ENCODE measurements at regions of chr6 and their contacts with region 1.

Region 1: GRCh38 chr6:138987640-138988468 is at the start of gene REPS1:
- DNase-seq: peak; percentile 86
- H3K4me3 ChIP-seq: peak within 1 kb of the TSS; percentile 84 to 92
- H3K27ac ChIP-seq: peak within 1 kb of the TSS; percentile 89
- H3K4me1 ChIP-seq: no peaks in the 10 kb centered on the region
- H3K27me3 ChIP-seq: no peaks in the 10 kb centered on the region
- CTCF ChIP-seq: peak; percentile 96 to 99 (median 97)
- POLR2A ChIP-seq: peak; percentile 79
- total RNA-seq, gene REPS1: 38.6 to 97.1 TPM

Region 2: GRCh38 chr6:138817822-138818308 is 170.0 kb before region 1 on chr6:
- intact Hi-C with region 1: loop called (anchors 2 kb)
- DNase-seq: peak; percentile 97
- H3K4me3 ChIP-seq: no peak overlapping the region
- H3K27ac ChIP-seq: peak overlapping the region; percentile 79 to 81
- H3K4me1 ChIP-seq: peaks cover 8% of the 10 kb centered on the region
- H3K27me3 ChIP-seq: no peaks in the 10 kb centered on the region
- CTCF ChIP-seq: no peak
- POLR2A ChIP-seq: no peak

Measured in prostate gland (tissue), 2 donors.